ENCODE measurements at regions of chr17 and their contacts with region 1.

Region 1: GRCh38 chr17:69246726-69247375 is 18.2 kb upstream of the ABCA10 start:
- DNase-seq: no peak

Region 2: GRCh38 chr17:68782789-68783188 is 464.1 kb before region 1 on chr17:
- intact Hi-C with region 1: loop called (anchors 10 kb)
- DNase-seq: no peak

Region 3: GRCh38 chr17:69269131-69269998 is 22.5 kb after region 1 on chr17:
- intact Hi-C with region 1: no loop called
- DNase-seq: no peak

Measured in posterior vena cava (tissue), 2 donors.